ENCODE measurements at regions of chr16 and their contacts with region 1.

Region 1: GRCh38 chr16:30526823-30527635 is 663 bp upstream of the ZNF768 start:
- DNase-seq: peak; percentile 99
- H3K4me3 ChIP-seq: peak overlapping the region; percentile 61 to 88 (median 77)
- H3K27ac ChIP-seq: peak overlapping the region; percentile 94 to 100 (median 100)
- H3K4me1 ChIP-seq: peaks cover 0 to 26% (median 14%) of the 10 kb centered on the region in 4 donors
- H3K27me3 ChIP-seq: no peaks in the 10 kb centered on the region
- CTCF ChIP-seq: peak; percentile 20 to 40 (median 26)
- EP300 ChIP-seq: no peak
- POLR2A ChIP-seq: peak; percentile 50 to 66

Region 2: DNA sequence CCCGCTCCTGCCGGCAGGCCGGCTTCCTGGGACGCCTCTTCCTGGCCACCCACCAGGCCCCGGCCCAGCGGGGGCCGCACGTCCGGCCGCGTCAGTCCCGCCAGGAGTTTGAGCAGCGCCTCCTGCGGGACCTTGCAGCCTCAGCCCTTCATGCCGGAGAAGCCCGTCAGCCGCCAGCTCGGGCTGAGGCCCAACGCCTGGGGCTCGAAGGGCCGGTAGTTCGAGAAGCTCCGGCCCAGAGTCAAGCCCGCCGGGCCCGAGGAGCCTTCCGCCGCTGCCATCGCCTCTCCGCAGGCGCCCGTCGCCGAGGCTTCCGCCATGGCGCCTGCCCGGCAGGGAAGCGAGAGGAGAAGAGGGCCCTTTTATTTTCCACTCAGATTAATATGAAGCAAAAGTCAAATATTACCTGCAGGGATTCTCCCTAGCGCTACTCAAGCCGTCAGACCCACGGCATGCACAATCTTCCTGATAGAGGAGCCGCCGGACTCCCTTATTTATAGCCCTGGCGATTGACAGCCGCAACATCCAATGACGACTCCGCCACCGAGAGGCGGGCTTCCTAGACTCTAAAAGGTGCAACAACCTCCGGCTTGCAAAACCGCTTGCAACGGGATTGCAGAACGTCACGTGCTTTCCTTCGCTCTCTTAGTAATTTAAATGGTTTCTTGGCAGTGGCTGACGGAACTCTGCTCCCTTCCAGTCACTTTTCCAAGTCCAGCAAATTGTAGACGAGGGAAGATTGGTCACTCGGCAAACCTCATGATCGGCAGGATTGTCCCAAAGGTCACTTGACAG is 81.4 kb before region 1 on chr16 and contains the start of gene SEPHS2:
- intact Hi-C with region 1: loop called (anchors 5 kb)
- DNase-seq: peak; percentile 99
- H3K4me3 ChIP-seq: peak within 1 kb of the TSS; percentile 69 to 99 (median 80)
- H3K27ac ChIP-seq: peak within 1 kb of the TSS; percentile 90 to 99 (median 96)
- H3K4me1 ChIP-seq: peaks cover 0 to 22% (median 14%) of the 10 kb centered on the region in 4 donors
- H3K27me3 ChIP-seq: no peaks in the 10 kb centered on the region
- CTCF ChIP-seq: peak in 3 of 4 experiments; percentile 30 to 39 (median 37)
- EP300 ChIP-seq: no peak
- POLR2A ChIP-seq: peak; percentile 65 to 84
- total RNA-seq, gene SEPHS2: 25.0 to 32.3 (median 25.3) TPM

Region 3: DNA sequence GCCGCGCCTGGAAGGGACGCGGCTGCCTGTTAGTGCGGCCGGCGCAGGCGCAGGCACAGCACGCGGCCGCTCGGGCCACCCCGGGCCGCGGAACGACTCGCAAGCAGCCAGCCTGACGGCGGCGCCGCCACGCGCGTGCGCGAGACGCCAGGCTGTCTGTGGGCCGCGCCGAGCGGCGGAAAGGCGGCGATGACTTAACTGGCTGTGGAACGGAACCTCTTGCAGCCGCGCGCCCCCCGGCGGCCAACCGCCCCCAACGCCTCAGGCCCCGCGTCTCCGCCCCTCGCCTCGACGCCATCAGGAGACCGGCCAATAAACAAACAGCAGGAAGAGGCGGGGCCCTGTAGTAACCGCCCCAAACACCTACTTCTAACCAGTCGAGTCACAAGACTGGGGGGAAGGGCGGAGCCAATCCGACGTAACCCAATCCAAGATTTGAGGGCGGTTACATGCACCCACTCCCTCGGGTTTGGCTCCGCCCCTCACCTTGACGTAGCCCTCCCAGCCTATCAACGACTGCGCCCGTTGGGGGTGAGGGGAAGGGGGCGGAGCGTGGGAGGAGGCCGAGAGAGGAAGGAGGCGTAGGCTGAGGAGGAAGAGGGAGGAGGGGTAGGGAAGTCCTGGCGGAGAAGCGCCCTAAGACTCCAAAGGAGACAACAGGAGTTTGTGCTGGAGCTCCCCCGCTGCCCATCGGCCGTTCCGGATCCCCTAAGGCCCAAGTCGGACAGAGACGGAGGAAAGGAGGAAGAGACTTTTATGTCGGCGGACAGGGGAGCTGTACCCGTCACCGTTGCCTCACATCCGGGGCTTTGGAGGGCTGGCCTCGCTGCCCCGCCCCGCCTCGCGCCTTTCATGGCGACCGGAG is 131.1 kb after region 1 on chr16 and contains the start of gene FBRS:
- intact Hi-C with region 1: loop called (anchors 2 kb)
- DNase-seq: peak; percentile 100
- H3K4me3 ChIP-seq: peak within 1 kb of the TSS; percentile 91 to 99 (median 97)
- H3K27ac ChIP-seq: peak within 1 kb of the TSS; percentile 96 to 98 (median 97)
- H3K4me1 ChIP-seq: peaks cover 0 to 58% (median 53%) of the 10 kb centered on the region in 4 donors
- H3K27me3 ChIP-seq: no peaks in the 10 kb centered on the region
- CTCF ChIP-seq: peak in 3 of 4 experiments; percentile 8 to 66 (median 38)
- EP300 ChIP-seq: peak in 2 of 4 donors; percentile 49 to 52
- POLR2A ChIP-seq: peak; percentile 78 to 94
- total RNA-seq, gene FBRS: 12.5 to 29.6 (median 22.7) TPM

Region 4: DNA sequence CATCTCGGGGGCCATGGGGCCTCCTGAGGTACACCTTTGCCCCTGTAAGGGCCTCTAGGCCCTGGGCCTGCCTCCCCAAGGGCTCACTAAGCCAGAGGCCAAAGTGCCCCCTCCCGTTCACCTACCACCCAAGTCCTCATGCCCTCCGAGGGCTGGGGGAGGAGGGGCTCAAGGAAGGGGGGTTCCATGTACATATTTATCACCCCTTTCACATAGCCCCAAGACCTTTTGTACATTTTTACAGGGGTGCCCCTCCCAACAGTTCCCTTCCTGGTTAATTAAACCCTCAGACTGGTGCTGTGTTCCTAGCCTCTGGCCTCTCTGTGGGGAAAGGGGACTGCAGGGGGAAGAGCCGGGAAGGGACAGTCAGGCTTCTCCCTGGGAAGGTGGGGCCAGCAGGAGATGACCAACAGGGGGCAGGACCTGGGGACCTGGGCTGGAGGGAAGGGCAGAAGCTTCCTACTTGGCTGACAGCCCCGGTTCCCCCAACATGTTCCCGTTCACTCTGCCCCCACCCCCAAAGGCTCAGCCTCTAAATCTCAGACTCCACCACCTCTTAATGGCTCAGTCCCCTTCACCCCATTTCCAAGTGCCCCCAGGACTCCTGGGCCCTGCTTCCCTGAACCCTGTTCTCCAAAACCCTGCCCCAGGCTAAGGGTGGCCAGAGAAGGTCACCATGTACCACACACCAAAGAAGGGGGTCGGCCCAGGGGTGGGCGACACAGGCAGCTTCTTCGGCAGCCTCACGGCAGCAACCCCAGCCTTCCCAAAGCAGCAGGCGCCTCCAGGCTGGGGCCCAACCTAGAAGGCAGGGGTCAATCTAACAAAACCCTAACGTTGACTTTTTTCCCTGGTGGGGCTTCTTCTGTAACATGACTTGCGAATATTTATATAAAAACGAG is 143.1 kb after region 1 on chr16:
- intact Hi-C with region 1: no loop called
- DNase-seq: no peak
- H3K4me3 ChIP-seq: no peak overlapping the region
- H3K27ac ChIP-seq: no peak overlapping the region
- H3K4me1 ChIP-seq: no peaks in the 10 kb centered on the region
- H3K27me3 ChIP-seq: no peaks in the 10 kb centered on the region
- CTCF ChIP-seq: no peak
- EP300 ChIP-seq: no peak
- POLR2A ChIP-seq: no peak